ENCODE measurements at regions of chr17 and their contacts with region 1.

Region 1: DNA sequence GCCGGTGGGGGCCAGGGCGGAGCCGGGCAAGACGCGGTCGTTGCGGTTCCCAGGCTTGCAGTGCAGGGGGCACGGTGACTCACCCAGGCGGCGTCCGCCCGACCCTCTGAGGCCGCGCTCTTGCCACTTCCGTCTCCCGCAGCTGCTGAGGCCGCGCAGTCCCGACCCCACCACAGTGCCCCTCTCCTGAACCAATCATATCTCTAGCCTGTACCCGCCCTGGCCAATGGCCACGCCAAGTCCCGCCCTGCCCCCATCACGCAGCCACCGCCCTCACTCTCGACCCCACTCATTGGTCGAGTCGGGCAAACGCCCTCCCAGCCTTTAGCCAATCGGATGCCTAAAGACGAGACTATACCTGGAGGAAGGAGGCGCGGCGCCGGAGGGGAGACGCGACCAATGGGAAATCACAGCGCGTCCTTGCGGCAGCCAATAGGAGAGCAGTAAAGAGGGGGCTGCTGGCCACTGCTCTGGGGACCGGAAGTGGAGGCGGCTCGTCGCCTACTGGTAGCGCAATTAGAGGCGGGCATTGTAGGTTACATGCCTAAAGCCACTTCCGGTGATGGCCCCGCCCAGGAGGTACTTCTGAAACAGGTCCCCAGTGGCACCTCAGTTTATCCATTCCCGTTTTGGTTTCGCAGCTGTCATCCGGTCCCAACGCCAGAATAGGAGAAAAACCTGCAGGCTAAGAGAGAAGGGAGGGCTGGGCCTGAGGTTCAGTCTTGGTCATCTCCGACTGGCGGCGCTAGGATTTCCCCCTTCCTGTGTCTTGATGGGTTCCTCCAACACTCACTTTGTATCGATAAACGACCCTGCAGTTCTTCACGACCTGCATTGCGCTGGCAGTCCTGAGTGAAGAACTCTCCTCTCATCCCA is 3.5 kb upstream of the MTMR4 start:
- DNase-seq: peak; percentile 100
- ATAC-seq: peak; percentile 87
- H3K4me3 Mint-ChIP-seq: peak overlapping the region; percentile 96
- H3K27ac Mint-ChIP-seq: peak overlapping the region; percentile 95
- H3K4me1 Mint-ChIP-seq: peaks cover 32% of the 10 kb centered on the region
- H3K27me3 Mint-ChIP-seq: no peaks in the 10 kb centered on the region

Region 2: GRCh38 chr17:56833809-56834379 is 1684.1 kb before region 1 on chr17 and contains the starts of genes C17orf67 and DGKE:
- CTCF ChIA-PET with region 1: no interaction called
- POLR2A ChIA-PET with region 1: no interaction called
- intact Hi-C with region 1: loop called in 1 of 2 experiments (anchors 5 kb)
- DNase-seq: peak; percentile 100
- ATAC-seq: peak; percentile 93
- H3K4me3 Mint-ChIP-seq: peak within 1 kb of the TSS; percentile 86
- H3K27ac Mint-ChIP-seq: peak within 1 kb of the TSS; percentile 90
- H3K4me1 Mint-ChIP-seq: peaks cover 62% of the 10 kb centered on the region
- H3K27me3 Mint-ChIP-seq: no peaks in the 10 kb centered on the region
- total RNA-seq, gene C17orf67: 4.0 to 5.0 TPM
- total RNA-seq, gene DGKE: 22.4 to 27.4 TPM

Region 3: GRCh38 chr17:58082870-58083490 is 435.0 kb before region 1 on chr17 and contains the start of gene DYNLL2:
- CTCF ChIA-PET with region 1: no interaction called
- POLR2A ChIA-PET with region 1: no interaction called
- intact Hi-C with region 1: loop called in 1 of 2 experiments (anchors 2 kb)
- DNase-seq: peak; percentile 95
- ATAC-seq: peak; percentile 89
- H3K4me3 Mint-ChIP-seq: peak within 1 kb of the TSS; percentile 83
- H3K27ac Mint-ChIP-seq: peak within 1 kb of the TSS; percentile 79
- H3K4me1 Mint-ChIP-seq: peaks cover 35% of the 10 kb centered on the region
- H3K27me3 Mint-ChIP-seq: no peaks in the 10 kb centered on the region
- total RNA-seq, gene DYNLL2: 21.3 to 28.3 TPM

Region 4: DNA sequence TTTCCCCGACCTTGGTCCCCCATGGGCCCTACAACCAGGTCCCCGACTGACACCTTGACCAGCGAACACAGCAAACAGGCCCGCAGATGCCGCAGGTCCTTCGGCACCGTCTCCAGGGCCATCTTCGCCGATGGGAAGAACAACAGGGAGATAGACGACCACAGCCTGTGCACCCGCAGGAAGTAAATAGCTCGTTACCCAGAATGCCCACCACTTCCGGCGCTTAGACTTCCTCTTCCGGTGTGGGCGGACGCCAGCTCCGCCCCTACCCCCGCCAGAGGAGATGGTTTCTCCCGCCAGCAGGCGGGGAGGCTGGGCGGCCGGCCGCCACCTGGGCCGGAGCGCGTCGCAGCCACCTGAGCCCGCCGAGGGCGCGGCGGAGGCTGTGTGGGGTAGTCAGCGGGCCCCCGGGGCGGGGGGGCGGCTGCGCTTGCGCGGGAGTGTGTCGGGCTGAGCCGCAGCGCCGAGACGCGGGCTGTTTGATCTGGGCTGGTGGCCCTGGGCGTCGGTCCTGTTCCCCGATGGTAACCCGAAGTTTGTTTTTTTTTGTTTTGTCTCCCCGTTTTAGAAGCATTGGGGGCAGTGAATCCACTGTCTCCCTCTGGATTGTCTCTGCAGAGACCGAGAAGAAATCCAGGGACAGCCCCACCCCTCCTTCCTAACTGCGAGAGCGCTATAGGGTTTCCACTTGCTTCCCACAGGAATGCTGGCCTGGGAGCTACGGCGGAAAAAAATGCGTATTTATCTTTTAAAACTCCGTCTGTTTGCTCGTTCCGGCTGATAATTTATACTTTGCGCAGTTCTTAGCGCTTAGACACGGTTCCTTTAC is 165.7 kb before region 1 on chr17 and contains the start of gene SUPT4H1:
- CTCF ChIA-PET with region 1: interaction called, 4 read pairs
- POLR2A ChIA-PET with region 1: interaction called, 4 read pairs
- intact Hi-C with region 1: loop called (anchors 1 kb)
- DNase-seq: peak; percentile 96
- ATAC-seq: peak; percentile 78
- H3K4me3 Mint-ChIP-seq: peak within 1 kb of the TSS; percentile 97
- H3K27ac Mint-ChIP-seq: peak within 1 kb of the TSS; percentile 98
- H3K4me1 Mint-ChIP-seq: peaks cover 38% of the 10 kb centered on the region
- H3K27me3 Mint-ChIP-seq: no peaks in the 10 kb centered on the region
- total RNA-seq, gene SUPT4H1: 106 to 129 TPM

Region 5: DNA sequence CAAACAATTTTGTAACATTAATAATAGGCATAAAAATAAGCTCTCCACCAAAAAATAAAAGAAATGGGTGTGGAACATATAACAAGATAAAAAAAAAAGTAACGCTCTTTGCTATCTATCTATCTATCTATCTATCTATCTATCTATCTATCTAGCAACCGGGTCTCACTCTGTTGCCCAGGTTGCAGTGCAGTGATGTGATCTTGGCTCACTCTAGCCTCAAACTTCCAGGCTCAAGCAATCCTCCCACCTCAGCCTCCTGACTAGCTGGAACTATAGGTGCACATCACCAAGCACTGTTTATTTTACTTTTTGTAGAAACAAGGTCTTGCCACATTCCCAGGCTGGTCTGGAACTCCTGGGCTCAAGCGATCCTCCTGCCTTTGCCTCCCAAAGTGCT is 37.3 kb before region 1 on chr17:
- CTCF ChIA-PET with region 1: no interaction called
- POLR2A ChIA-PET with region 1: no interaction called
- intact Hi-C with region 1: no loop called
- DNase-seq: no peak
- ATAC-seq: no peak
- H3K4me3 Mint-ChIP-seq: no peak overlapping the region
- H3K27ac Mint-ChIP-seq: no peak overlapping the region
- H3K4me1 Mint-ChIP-seq: peaks cover 2% of the 10 kb centered on the region
- H3K27me3 Mint-ChIP-seq: no peaks in the 10 kb centered on the region

Region 6: DNA sequence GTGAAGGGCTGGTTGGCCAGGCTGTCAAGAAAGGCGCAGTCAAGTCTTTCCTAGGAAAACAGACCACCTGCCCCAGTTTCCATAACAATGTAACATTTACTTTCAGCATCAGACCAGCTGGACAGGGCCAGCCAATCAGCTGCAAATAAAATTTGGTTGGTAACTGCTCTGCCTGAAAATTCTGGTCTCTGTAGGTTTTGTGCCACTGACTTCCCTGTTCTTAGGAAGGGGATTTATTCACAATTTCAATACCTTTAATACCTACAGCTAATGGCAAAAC is 50.5 kb after region 1 on chr17:
- CTCF ChIA-PET with region 1: no interaction called
- POLR2A ChIA-PET with region 1: no interaction called
- intact Hi-C with region 1: no loop called
- DNase-seq: no peak
- ATAC-seq: no peak
- H3K4me3 Mint-ChIP-seq: no peak overlapping the region
- H3K27ac Mint-ChIP-seq: no peak overlapping the region
- H3K4me1 Mint-ChIP-seq: peaks cover 9% of the 10 kb centered on the region
- H3K27me3 Mint-ChIP-seq: peaks cover 2% of the 10 kb centered on the region

Region 7: DNA sequence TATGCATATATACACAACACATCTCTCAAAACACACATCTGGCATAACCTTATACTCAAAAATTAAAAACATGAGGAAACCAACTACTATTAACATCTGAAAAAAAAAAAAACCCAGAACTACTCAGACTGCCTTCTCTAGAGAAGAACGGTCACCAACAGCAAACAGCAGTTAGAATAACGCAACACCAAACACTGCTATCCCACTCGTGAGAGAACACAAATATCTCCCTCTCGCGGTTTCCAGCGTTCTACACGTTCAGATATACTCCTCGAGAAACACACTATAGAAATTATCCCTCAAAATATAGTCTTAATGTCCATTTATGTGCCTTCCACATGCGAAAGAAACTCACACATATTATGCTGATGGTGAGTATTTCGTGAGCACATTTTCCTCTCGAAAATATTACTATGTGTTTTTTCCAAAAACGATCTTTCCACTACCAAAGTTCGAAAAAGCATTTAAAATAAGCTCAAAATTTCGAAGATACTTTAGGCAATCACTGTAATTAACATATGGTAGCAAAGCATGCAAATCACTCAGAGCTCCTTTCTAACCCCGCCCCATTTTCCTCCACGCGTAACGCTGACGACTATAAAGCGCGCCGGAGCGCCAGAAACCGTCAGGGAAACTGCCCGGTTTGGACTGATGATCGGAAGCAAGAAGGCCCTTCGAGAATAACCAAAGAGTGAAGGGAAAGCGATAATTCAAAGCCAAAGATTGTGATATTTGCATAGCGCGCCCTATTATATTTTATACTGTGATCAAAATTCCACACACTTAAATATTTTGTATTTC is 113.8 kb after region 1 on chr17:
- CTCF ChIA-PET with region 1: interaction called, 12 read pairs
- POLR2A ChIA-PET with region 1: interaction called, 66 read pairs
- intact Hi-C with region 1: loop called (anchors 1 kb)
- DNase-seq: peak; percentile 96
- ATAC-seq: peak; percentile 97
- H3K4me3 Mint-ChIP-seq: no peak overlapping the region
- H3K27ac Mint-ChIP-seq: no peak overlapping the region
- H3K4me1 Mint-ChIP-seq: peaks cover 3% of the 10 kb centered on the region
- H3K27me3 Mint-ChIP-seq: no peaks in the 10 kb centered on the region

Region 8: GRCh38 chr17:58679263-58680037 is 161.5 kb after region 1 on chr17:
- CTCF ChIA-PET with region 1: no interaction called
- POLR2A ChIA-PET with region 1: no interaction called
- intact Hi-C with region 1: no loop called
- DNase-seq: no peak
- ATAC-seq: peak; percentile 33
- H3K4me3 Mint-ChIP-seq: no peak overlapping the region
- H3K27ac Mint-ChIP-seq: no peak overlapping the region
- H3K4me1 Mint-ChIP-seq: no peaks in the 10 kb centered on the region
- H3K27me3 Mint-ChIP-seq: peaks cover 4% of the 10 kb centered on the region

Region 9: GRCh38 chr17:59106463-59107305 is 588.7 kb after region 1 on chr17 and contains the start of gene TRIM37:
- CTCF ChIA-PET with region 1: no interaction called
- POLR2A ChIA-PET with region 1: interaction called, 3 read pairs
- intact Hi-C with region 1: loop called (anchors 1 to 5 kb)
- DNase-seq: peak; percentile 99
- ATAC-seq: peak; percentile 95
- H3K4me3 Mint-ChIP-seq: peak within 1 kb of the TSS; percentile 85
- H3K27ac Mint-ChIP-seq: peak within 1 kb of the TSS; percentile 92
- H3K4me1 Mint-ChIP-seq: peaks cover 49% of the 10 kb centered on the region
- H3K27me3 Mint-ChIP-seq: no peaks in the 10 kb centered on the region
- total RNA-seq, gene TRIM37: 21.3 to 22.7 TPM